ENCODE measurements at regions of chr10 and their contacts with region 1.

Region 1: GRCh38 chr10:67224553-67224952 is 298.7 kb downstream of the LRRTM3 start:
- DNase-seq: no peak
- ATAC-seq: no peak
- H3K4me3 Mint-ChIP-seq: no peak overlapping the region
- H3K27ac Mint-ChIP-seq: no peak overlapping the region
- H3K4me1 Mint-ChIP-seq: no peaks in the 10 kb centered on the region
- H3K27me3 Mint-ChIP-seq: peaks cover 21% of the 10 kb centered on the region

Region 2: GRCh38 chr10:68088744-68089143 is 864.2 kb after region 1 on chr10:
- CTCF ChIA-PET with region 1: no interaction called
- POLR2A ChIA-PET with region 1: no interaction called
- intact Hi-C with region 1: loop called in 1 of 2 experiments (anchors 5 kb)
- DNase-seq: peak; percentile 33
- ATAC-seq: peak; percentile 90
- H3K4me3 Mint-ChIP-seq: peak overlapping the region; percentile 10
- H3K27ac Mint-ChIP-seq: no peak overlapping the region
- H3K4me1 Mint-ChIP-seq: peaks cover 9% of the 10 kb centered on the region
- H3K27me3 Mint-ChIP-seq: peaks cover 4% of the 10 kb centered on the region

Measured in activated CD4-positive, alpha-beta T cell treated with anti-CD3 and anti-CD28 coated beads for 36 hours (primary cell).